ENCODE measurements at regions of chr1 and their contacts with region 1.

Region 1: DNA sequence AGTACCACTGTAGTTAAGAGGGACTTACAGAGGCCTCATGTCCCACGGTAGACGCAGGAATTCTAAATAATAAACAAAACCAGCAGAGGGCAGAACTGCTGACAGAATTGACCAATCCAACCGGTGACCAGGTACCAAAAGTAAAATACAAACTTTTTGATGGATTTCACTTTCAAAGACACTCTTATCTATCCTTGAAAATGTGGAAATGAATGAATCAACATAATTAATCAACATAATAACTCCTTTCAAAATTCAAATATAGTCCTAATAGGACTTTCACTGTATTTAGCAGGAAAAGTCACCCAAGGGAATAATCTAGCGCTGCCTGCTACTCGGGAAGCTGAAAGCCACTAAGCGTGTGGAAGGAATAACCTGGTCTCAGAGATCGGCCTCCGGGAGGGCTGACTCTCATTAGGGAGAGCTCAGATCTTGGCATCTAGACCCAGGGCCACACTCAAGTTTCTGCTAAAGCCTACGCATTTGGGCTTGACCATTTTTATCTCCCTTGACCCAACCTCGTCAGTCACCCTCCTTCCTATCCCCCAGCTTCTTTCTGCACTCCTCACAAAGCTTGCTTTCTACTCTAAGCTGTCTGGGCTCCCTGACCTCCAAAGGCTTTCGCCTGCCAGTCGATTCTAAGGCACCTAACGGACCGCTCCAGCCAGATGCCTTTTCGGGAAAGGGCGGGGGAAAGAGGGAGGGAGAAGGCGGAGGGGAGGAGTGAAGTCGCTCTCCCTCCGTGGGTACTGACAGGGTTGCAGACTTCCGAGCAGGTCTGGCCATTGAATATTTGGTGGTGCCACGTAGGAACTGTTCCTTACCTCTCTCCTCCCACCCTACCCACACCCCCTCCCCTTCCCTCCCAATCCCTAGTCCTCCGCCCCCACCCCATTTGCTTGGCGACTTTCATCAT is 1.6 kb downstream of the COL11A1 start:
- DNase-seq: peak in 1 of 2 donors; percentile 57
- H3K4me3 ChIP-seq: peak overlapping the region; percentile 44 to 55
- H3K27ac ChIP-seq: no peak overlapping the region
- H3K4me1 ChIP-seq: peaks cover 0 to 2% of the 10 kb centered on the region in 2 donors
- H3K27me3 ChIP-seq: no peaks in the 10 kb centered on the region
- CTCF ChIP-seq: peak in 2 of 3 experiments; percentile 26 to 47

Region 2: DNA sequence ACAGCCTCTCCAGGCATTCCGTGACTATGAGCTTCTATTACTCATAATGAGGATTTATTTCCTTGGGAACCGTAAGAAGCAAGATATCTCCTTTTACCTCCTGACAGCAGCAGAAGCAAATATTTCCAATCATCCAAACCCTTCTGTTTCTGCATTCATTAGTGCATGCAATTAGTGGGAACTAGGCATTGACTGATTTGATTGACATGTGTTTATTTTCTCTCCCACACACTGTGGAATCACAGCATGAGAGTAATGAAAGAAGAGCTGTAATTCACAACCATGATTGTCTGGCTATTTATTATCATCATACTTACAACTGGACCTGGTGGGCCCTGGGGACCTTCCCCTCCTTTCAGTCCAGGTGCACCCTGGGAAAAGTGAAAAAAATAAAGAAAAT is 145.1 kb before region 1 on chr1:
- intact Hi-C with region 1: no loop called
- DNase-seq: no peak
- H3K4me3 ChIP-seq: no peak overlapping the region
- H3K27ac ChIP-seq: no peak overlapping the region
- H3K4me1 ChIP-seq: no peaks in the 10 kb centered on the region
- H3K27me3 ChIP-seq: no peaks in the 10 kb centered on the region
- CTCF ChIP-seq: no peak

Region 3: DNA sequence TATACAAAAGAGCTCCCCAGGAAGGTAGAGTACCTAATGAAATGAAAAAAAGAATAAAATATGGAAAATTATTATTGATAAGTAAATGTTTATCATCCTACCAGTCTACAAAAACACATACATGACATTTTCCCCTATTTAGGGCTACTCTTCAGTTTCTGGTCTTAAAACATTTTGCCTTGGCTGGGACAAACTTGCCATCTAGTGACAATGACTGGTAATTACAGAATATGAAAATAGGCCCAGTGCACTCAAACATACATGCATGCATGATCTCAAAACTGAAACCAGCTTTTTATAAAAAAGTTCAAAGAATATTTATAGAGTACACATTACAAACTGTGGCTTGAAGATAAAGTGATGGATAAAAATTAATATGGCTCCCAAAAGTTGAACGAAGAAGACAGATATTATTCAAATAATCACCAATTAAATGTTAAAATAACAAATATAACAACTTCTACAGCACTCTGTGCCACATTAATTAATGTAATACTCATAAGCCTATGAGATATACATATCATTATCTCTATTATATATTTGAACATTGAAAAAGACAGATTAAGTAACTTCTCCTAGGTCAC is 408.3 kb after region 1 on chr1:
- intact Hi-C with region 1: loop called (anchors 5 kb)
- DNase-seq: no peak
- H3K4me3 ChIP-seq: no peak overlapping the region
- H3K27ac ChIP-seq: no peak overlapping the region
- H3K4me1 ChIP-seq: no peaks in the 10 kb centered on the region
- H3K27me3 ChIP-seq: no peaks in the 10 kb centered on the region
- CTCF ChIP-seq: peak; percentile 31 to 75 (median 68)

Measured in ascending aorta (tissue), 2 donors.